ENCODE measurements at regions of chr16 and their contacts with region 1.

Region 1: GRCh38 chr16:28879841-28880588 is 1.7 kb downstream of the ATP2A1 start:
- DNase-seq: peak; percentile 79
- H3K4me3 ChIP-seq: peak overlapping the region; percentile 32 to 50
- H3K27ac ChIP-seq: no peak overlapping the region
- H3K4me1 ChIP-seq: peaks cover 5% of the 10 kb centered on the region
- H3K27me3 ChIP-seq: no peaks in the 10 kb centered on the region
- CTCF ChIP-seq: peak in 2 of 4 experiments; percentile 43 to 55
- POLR2A ChIP-seq: no peak

Region 2: GRCh38 chr16:28924732-28925385 is 44.8 kb after region 1 on chr16 and contains the start of gene RABEP2:
- intact Hi-C with region 1: loop called (anchors 5 kb)
- DNase-seq: peak; percentile 99
- H3K4me3 ChIP-seq: peak within 1 kb of the TSS; percentile 61 to 77
- H3K27ac ChIP-seq: peak within 1 kb of the TSS; percentile 96 to 98
- H3K4me1 ChIP-seq: no peaks in the 10 kb centered on the region
- H3K27me3 ChIP-seq: no peaks in the 10 kb centered on the region
- CTCF ChIP-seq: no peak
- POLR2A ChIP-seq: peak; percentile 40
- total RNA-seq, gene RABEP2: 128 to 139 TPM